Heart left ventricle (tissue), 16 donors: ENCODE measurements at regions of chr20 and their contacts with region 1.

Region 1: GRCh38 chr20:14264869-14265268 is 72.5 kb downstream of the FLRT3 start:
- DNase-seq: no peak
- ATAC-seq: no peak
- H3K4me3 ChIP-seq: no peak overlapping the region
- H3K27ac ChIP-seq: no peak overlapping the region
- H3K4me1 ChIP-seq: no peaks in the 10 kb centered on the region
- H3K27me3 ChIP-seq: no peaks in the 10 kb centered on the region
- CTCF ChIP-seq: peak in 6 of 12 donors; percentile 8 to 25 (median 16)
- POLR2A ChIP-seq: no peak

Region 2: DNA sequence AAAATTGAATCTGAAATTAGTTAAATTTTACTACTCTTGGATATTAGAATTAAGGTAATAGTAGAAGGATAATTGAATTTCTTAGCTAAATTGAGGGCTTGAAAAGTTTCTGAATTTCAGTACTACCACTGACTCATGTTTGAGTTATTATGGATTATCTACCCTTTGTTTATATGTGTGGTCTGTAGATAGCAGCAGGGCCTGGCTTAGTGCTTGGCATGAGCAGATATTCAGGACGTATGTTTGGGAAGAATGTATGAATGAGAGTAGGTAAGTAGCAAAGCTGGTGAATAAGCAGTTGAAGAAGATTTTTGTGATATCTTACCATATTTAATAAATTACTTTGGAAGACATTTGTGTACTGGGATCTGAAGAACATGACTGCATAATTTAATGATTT is 116.8 kb before region 1 on chr20:
- intact Hi-C with region 1: loop called in 1 of 10 experiments (anchors 5 kb)
- DNase-seq: no peak
- ATAC-seq: no peak
- H3K4me3 ChIP-seq: no peak overlapping the region
- H3K27ac ChIP-seq: no peak overlapping the region
- H3K4me1 ChIP-seq: no peaks in the 10 kb centered on the region
- H3K27me3 ChIP-seq: no peaks in the 10 kb centered on the region
- CTCF ChIP-seq: no peak
- POLR2A ChIP-seq: no peak

Region 3: GRCh38 chr20:14189794-14190402 is 75.0 kb before region 1 on chr20:
- intact Hi-C with region 1: loop called in 1 of 10 experiments (anchors 10 kb)
- DNase-seq: no peak
- ATAC-seq: no peak
- H3K4me3 ChIP-seq: no peak overlapping the region
- H3K27ac ChIP-seq: no peak overlapping the region
- H3K4me1 ChIP-seq: no peaks in the 10 kb centered on the region
- H3K27me3 ChIP-seq: no peaks in the 10 kb centered on the region
- CTCF ChIP-seq: peak in 5 of 12 donors; percentile 7 to 33 (median 17)
- POLR2A ChIP-seq: no peak

Region 4: DNA sequence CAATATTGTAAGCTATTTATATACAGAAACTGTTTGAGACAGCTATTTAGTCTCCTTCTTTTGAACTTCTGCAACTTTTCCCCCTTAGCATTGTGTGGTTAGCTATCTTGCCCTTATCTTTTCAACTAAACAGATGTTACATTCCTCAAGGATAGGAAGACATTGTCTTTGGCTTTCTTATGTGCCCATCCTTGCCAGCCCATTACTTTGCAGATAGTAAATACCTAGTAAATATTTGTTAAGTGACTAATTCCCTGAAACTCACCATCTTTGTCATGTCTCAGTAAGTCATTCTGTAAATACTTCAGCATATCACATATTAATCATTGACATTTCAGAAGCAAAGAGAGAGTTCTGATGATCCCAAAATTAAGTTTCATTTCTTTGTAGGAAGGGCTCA is 141.6 kb after region 1 on chr20:
- intact Hi-C with region 1: no loop called
- DNase-seq: no peak
- ATAC-seq: no peak
- H3K4me3 ChIP-seq: no peak overlapping the region
- H3K27ac ChIP-seq: no peak overlapping the region
- H3K4me1 ChIP-seq: no peaks in the 10 kb centered on the region
- H3K27me3 ChIP-seq: no peaks in the 10 kb centered on the region
- CTCF ChIP-seq: no peak
- POLR2A ChIP-seq: no peak

Region 5: DNA sequence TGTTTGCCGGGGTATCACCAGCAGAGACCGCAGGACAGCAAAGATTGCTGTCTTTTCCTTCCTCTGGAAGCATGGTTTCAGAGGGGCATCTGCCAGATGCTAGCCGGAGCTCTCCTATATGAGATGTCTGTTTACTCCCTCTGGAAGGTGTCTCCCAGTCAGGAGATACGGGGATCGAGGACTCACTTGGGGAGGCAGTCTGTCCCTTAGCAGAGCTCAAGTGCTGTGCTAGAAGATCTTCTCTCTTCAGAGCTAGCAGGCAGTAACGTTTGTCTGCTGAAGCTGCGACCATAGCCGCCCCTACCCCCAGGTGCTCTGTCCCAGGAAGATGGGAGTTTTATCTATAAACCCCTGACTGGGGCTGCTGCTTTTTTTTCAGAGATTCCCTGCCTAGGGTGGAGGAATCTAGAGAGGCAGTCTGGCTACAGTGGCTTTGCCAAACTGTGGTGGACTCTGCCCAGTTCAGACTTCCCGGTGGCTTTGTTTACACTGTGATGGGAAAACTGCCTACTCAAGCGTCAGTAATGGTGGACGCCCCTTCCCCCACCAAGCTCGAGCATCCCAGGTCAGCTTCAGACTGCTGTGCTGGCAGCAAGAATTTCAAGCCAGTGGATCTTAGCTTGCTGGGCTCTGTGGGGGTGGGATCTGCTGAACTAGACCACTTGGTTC is 205.5 kb after region 1 on chr20:
- intact Hi-C with region 1: no loop called
- DNase-seq: no peak
- ATAC-seq: no peak
- H3K4me3 ChIP-seq: no peak overlapping the region
- H3K27ac ChIP-seq: no peak overlapping the region
- H3K4me1 ChIP-seq: no peaks in the 10 kb centered on the region
- H3K27me3 ChIP-seq: no peaks in the 10 kb centered on the region
- CTCF ChIP-seq: no peak
- POLR2A ChIP-seq: no peak